ENCODE measurements at regions of chr1 and their contacts with region 1.

Region 1: GRCh38 chr1:26719204-26719603 is 23.4 kb downstream of the ARID1A start:
- DNase-seq: no peak
- H3K4me3 ChIP-seq: no peak overlapping the region
- H3K4me3 Mint-ChIP-seq: no peak overlapping the region
- H3K27ac Mint-ChIP-seq: no peak overlapping the region
- H3K4me1 ChIP-seq: peaks cover 44% of the 10 kb centered on the region
- H3K4me1 Mint-ChIP-seq: peaks cover 26% of the 10 kb centered on the region
- H3K27me3 ChIP-seq: no peaks in the 10 kb centered on the region
- H3K27me3 Mint-ChIP-seq: no peaks in the 10 kb centered on the region
- CTCF ChIP-seq: peak in 1 of 2 experiments; percentile 12

Region 2: GRCh38 chr1:26582836-26583460 is 136.3 kb before region 1 on chr1:
- CTCF ChIA-PET with region 1: no interaction called
- POLR2A ChIA-PET with region 1: no interaction called
- intact Hi-C with region 1: no loop called
- DNase-seq: no peak
- H3K4me3 ChIP-seq: no peak overlapping the region
- H3K4me3 Mint-ChIP-seq: no peak overlapping the region
- H3K27ac Mint-ChIP-seq: no peak overlapping the region
- H3K4me1 ChIP-seq: no peaks in the 10 kb centered on the region
- H3K4me1 Mint-ChIP-seq: no peaks in the 10 kb centered on the region
- H3K27me3 ChIP-seq: no peaks in the 10 kb centered on the region
- H3K27me3 Mint-ChIP-seq: no peaks in the 10 kb centered on the region
- CTCF ChIP-seq: no peak

Region 3: DNA sequence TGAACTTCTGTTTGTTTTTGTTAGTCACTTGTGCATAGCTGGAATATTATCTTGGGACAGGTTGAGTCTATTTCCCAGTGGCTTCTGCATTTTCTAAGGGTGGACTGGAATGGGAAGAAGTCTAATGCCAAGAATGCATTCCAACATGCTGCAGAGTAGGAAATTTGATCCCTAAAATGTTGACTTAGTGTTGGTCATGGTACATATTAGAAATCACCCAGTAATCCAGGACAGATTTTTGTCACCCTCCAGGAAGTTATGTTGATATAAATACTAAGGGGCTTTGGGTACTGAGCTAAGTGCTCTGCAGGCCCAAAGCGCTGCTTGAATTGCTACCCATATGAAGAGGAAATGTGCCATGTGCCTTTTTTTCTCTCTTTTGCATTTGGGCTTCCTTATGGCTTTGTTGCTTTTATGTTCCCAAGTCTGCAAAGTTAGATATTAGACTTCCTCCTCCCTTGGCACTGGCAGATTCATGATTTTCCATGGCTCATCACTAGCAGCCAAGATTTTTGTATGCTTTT is 13.4 kb before region 1 on chr1:
- CTCF ChIA-PET with region 1: no interaction called
- POLR2A ChIA-PET with region 1: interaction called, 3 read pairs
- intact Hi-C with region 1: loop called (anchors 2 kb)
- DNase-seq: no peak
- H3K4me3 ChIP-seq: no peak overlapping the region
- H3K4me3 Mint-ChIP-seq: peak overlapping the region; percentile 39
- H3K27ac Mint-ChIP-seq: peak overlapping the region; percentile 68
- H3K4me1 ChIP-seq: peaks cover 62% of the 10 kb centered on the region
- H3K4me1 Mint-ChIP-seq: peaks cover 29% of the 10 kb centered on the region
- H3K27me3 ChIP-seq: no peaks in the 10 kb centered on the region
- H3K27me3 Mint-ChIP-seq: no peaks in the 10 kb centered on the region
- CTCF ChIP-seq: no peak

Region 4: GRCh38 chr1:26744075-26744959 is 25.1 kb after region 1 on chr1:
- CTCF ChIA-PET with region 1: no interaction called
- POLR2A ChIA-PET with region 1: no interaction called
- intact Hi-C with region 1: no loop called
- DNase-seq: no peak
- H3K4me3 ChIP-seq: no peak overlapping the region
- H3K4me3 Mint-ChIP-seq: no peak overlapping the region
- H3K27ac Mint-ChIP-seq: peak overlapping the region; percentile 6
- H3K4me1 ChIP-seq: no peaks in the 10 kb centered on the region; the same call in 1 of the 2 replicates
- H3K4me1 Mint-ChIP-seq: peaks cover 19% of the 10 kb centered on the region
- H3K27me3 ChIP-seq: no peaks in the 10 kb centered on the region
- H3K27me3 Mint-ChIP-seq: no peaks in the 10 kb centered on the region
- CTCF ChIP-seq: no peak